ENCODE measurements at regions of chr6 and their contacts with region 1.

Region 1: GRCh38 chr6:142946181-142946923 is 1.4 kb upstream of the HIVEP2 start:
- DNase-seq: peak; percentile 95
- H3K4me3 Mint-ChIP-seq: peak overlapping the region; percentile 93
- H3K27ac Mint-ChIP-seq: peak overlapping the region; percentile 97
- H3K4me1 Mint-ChIP-seq: peaks cover 42% of the 10 kb centered on the region
- H3K27me3 Mint-ChIP-seq: peaks cover 3% of the 10 kb centered on the region

Region 2: GRCh38 chr6:142819603-142820337 is 126.6 kb before region 1 on chr6:
- intact Hi-C with region 1: loop called (anchors 1 kb)
- DNase-seq: peak; percentile 86
- H3K4me3 Mint-ChIP-seq: peak overlapping the region; percentile 88
- H3K27ac Mint-ChIP-seq: peak overlapping the region; percentile 94
- H3K4me1 Mint-ChIP-seq: peaks cover 63% of the 10 kb centered on the region
- H3K27me3 Mint-ChIP-seq: peaks cover 2% of the 10 kb centered on the region

Region 3: DNA sequence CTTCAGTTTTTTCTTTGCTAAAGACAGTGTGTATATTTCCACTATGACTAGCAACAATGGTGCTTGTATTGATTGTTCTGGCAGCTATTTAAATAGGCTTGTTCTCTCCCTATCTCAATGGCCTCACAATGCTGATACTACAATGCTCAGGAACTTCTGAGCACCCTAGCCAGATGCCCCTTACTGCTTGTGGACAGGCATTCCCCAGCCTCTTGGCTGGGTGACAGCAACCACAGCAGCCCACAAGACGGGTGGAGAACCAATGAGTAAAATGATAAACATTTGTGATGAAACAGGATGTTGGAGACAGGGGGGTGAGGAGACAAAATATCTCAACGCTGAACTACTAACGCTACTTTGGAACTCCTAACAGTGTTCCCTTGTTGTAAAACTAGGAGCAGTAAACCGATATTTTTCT is 43.7 kb before region 1 on chr6:
- intact Hi-C with region 1: loop called (anchors 1 kb)
- DNase-seq: peak; percentile 93
- H3K4me3 Mint-ChIP-seq: peak overlapping the region; percentile 78
- H3K27ac Mint-ChIP-seq: peak overlapping the region; percentile 98
- H3K4me1 Mint-ChIP-seq: peaks cover 63% of the 10 kb centered on the region
- H3K27me3 Mint-ChIP-seq: no peaks in the 10 kb centered on the region

Region 4: DNA sequence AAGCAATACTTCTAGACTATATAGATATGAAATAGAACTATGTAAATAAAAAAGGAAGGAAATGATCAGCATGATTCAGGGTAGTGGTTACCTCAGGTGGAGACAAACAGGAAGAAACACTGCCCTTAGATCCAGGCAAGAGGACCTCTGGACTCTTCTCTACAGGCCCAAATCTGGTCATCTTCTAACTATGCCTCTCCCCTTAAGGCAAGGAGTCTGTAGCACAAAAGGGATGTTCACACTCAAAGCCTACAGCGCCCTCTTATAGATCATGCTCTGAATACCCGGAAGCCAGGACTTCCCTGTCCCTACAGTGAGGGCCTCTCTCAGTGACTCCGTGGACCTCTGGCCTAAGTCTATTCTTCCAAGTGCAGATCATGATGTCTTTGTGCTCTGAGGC is 29.0 kb after region 1 on chr6:
- intact Hi-C with region 1: no loop called
- DNase-seq: no peak
- H3K4me3 Mint-ChIP-seq: no peak overlapping the region
- H3K27ac Mint-ChIP-seq: no peak overlapping the region
- H3K4me1 Mint-ChIP-seq: peaks cover 8% of the 10 kb centered on the region
- H3K27me3 Mint-ChIP-seq: peaks cover 4% of the 10 kb centered on the region

Region 5: GRCh38 chr6:143026696-143027449 is 80.5 kb after region 1 on chr6:
- intact Hi-C with region 1: loop called (anchors 5 kb)
- DNase-seq: peak; percentile 82
- H3K4me3 Mint-ChIP-seq: no peak overlapping the region
- H3K27ac Mint-ChIP-seq: no peak overlapping the region
- H3K4me1 Mint-ChIP-seq: peaks cover 4% of the 10 kb centered on the region
- H3K27me3 Mint-ChIP-seq: no peaks in the 10 kb centered on the region

Region 6: DNA sequence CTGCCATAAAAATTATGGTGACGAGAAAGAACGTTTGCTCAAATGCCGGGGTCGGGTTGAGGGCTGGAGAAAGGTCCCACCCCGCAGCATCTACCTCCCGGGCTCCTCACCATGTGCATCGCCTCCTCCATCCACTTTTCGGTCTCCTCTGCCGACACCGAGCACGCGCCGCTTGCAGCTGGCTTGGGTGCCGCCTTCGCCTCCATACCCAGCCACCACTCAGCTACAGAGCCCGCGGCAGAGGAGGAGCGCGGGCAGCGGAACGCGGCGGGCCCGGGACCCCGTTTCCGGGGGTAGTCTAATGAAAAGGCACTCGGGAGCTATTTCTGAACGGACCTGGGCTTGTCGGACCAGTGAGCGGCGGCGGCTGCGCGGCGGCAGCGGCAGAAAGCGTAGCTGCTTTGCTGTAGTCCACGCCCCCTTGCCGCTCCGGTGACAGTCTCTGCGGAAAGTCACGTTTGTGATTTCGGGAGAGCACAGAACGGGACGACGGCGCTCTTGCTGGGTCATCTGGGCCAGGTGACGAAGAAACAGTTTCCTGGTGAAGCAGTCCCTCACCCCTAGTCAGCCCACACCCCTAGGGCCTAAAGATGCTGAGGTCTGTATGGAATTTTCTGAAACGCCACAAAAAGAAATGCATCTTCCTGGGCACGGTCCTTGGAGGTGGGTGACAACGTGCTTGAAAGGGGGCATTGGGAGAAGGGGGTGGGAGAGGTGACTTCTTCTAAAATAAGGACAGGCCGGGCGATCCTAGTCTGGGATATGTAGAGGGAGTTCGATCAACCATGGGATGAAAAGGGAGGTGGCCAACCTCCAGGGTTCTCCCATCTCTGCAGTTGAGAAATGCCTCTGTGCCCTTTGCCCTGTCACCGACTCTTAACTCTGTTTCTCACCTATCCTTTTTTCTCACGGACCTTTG is 504.4 kb after region 1 on chr6 and contains the starts of genes ADAT2 and PEX3:
- intact Hi-C with region 1: loop called (anchors 2 kb)
- DNase-seq: peak; percentile 98
- H3K4me3 Mint-ChIP-seq: peak within 1 kb of the TSS; percentile 91
- H3K27ac Mint-ChIP-seq: peak within 1 kb of the TSS; percentile 99
- H3K4me1 Mint-ChIP-seq: peaks cover 36% of the 10 kb centered on the region
- H3K27me3 Mint-ChIP-seq: no peaks in the 10 kb centered on the region
- total RNA-seq, gene ADAT2: 46.0 and 47.7 TPM in 2 replicates
- total RNA-seq, gene PEX3: 26.0 and 28.5 TPM in 2 replicates

Region 7: GRCh38 chr6:144215932-144216667 is 1269.7 kb after region 1 on chr6:
- intact Hi-C with region 1: loop called (anchors 10 kb)
- DNase-seq: peak; percentile 97
- H3K4me3 Mint-ChIP-seq: peak overlapping the region; percentile 93
- H3K27ac Mint-ChIP-seq: peak overlapping the region; percentile 98
- H3K4me1 Mint-ChIP-seq: peaks cover 34% of the 10 kb centered on the region
- H3K27me3 Mint-ChIP-seq: peaks cover 9% of the 10 kb centered on the region